Aorta (tissue), 5 donors: ENCODE measurements at regions of chr2 and their contacts with region 1.

Region 1: GRCh38 chr2:52500561-52500960 is 1267.0 kb upstream of the CHAC2 start:
- DNase-seq: no peak
- ATAC-seq: no peak
- H3K4me3 ChIP-seq: no peak overlapping the region
- H3K27ac ChIP-seq: no peak overlapping the region
- H3K4me1 ChIP-seq: no peaks in the 10 kb centered on the region
- H3K27me3 ChIP-seq: no peaks in the 10 kb centered on the region

Region 2: DNA sequence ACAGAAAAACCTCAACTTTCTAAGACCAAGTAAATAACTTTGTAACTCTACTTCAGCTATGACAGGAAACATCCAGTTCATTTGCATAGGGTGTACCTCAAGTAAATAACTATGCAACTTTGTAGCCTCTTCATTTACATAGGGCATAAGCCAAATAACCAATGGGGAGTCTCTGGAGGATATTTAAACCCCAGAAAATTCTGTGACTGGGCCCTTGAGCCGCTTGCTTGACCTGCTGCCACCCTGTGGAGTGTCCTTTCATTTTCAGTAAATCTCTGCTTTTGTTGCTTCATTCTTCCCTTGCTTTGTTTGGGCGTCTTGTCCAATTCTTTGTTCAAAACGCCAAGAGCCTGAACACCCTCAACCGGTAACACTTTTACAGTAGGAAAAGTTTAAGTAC is 356.0 kb before region 1 on chr2:
- intact Hi-C with region 1: no loop called
- DNase-seq: no peak
- ATAC-seq: no peak
- H3K4me3 ChIP-seq: no peak overlapping the region
- H3K27ac ChIP-seq: no peak overlapping the region
- H3K4me1 ChIP-seq: no peaks in the 10 kb centered on the region
- H3K27me3 ChIP-seq: no peaks in the 10 kb centered on the region

Region 3: GRCh38 chr2:52563151-52563550 is 62.6 kb after region 1 on chr2:
- intact Hi-C with region 1: loop called in 1 of 2 experiments (anchors 10 kb)
- DNase-seq: no peak
- ATAC-seq: no peak
- H3K4me3 ChIP-seq: no peak overlapping the region
- H3K27ac ChIP-seq: no peak overlapping the region
- H3K4me1 ChIP-seq: no peaks in the 10 kb centered on the region
- H3K27me3 ChIP-seq: no peaks in the 10 kb centered on the region